CD14-positive monocyte (primary cell): ENCODE measurements at regions of chr12 and their contacts with region 1.

Region 1: DNA sequence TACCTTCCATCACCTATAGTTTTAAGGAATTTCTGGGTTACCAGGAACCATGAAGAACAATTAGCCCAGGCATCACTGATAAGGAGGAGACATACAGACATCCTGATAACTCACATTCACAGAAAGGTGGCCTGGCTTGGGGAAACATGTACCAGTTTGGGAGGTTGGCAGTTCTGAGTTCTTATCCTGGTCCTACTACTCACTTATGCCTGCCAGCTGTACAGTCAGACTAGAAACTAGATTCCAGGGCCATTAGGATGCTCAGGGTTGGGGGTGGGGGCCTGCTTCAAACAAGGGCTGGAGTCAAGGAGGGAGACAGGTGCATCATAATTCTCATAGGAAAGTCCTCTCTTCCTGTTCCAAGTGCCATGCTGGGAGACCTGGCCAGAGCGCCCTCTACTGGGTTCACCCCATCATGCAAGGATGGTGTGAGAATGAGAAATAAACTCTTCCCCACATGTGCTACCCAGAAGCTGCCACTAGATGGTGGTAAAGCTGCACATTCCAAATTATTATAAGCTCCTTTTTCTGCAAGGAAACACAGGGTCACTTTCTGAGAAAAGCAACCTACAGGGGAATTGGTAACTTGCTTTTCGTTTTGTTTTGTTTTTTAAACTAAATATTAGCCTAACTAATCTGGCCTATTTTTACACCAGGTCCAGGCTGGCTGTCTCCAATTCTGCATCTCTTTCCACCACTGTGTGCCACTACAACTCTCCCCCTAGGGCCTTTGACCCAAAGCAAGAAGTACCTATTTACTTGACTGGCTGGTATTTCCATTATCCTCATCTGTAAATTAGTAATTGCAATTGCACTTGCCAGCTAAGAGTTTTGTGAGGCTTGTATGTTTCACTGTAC is 14.5 kb downstream of the OAS2 start:
- DNase-seq: peak; percentile 42 to 62 (median 42)
- H3K4me3 ChIP-seq: no peak overlapping the region
- H3K4me3 Mint-ChIP-seq: no peak overlapping the region
- H3K27ac ChIP-seq: no peak overlapping the region
- H3K27ac Mint-ChIP-seq: peak overlapping the region in 1 of 7 donors; percentile 58
- H3K4me1 ChIP-seq: no peaks in the 10 kb centered on the region
- H3K4me1 Mint-ChIP-seq: peaks cover 2% of the 10 kb centered on the region
- H3K27me3 ChIP-seq: no peaks in the 10 kb centered on the region
- H3K27me3 Mint-ChIP-seq: no peaks in the 10 kb centered on the region
- CTCF ChIP-seq: peak; percentile 92

Region 2: DNA sequence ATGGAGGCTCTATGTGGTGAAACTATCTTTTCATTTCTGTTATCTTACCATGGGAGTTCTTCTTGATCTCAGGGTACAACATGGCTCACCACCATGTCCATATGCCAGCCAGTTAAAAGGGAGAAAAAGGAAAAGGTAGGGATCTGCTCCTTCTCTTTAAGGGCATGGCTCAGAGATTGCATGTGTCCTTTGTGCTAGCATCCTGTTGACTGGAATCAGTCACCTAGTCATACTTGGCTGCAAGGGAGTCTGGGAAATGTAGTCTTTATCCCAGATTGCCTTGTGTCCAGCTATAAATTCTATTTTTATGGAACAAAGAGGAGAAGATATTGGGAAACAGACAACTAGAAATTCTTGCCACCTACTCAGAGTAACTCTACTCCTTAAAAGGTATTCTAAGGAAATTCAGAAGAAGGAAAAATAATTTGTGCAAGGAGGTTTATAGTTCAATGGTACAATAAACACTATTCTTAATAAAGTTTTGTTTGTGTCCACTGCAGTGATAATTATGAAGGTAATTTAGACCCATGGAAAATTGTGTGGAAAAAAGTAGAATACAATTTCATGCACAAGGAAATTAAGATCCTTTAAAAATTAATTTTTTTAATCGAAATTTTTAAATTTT is 287.6 kb before region 1 on chr12:
- intact Hi-C with region 1: no loop called
- DNase-seq: no peak
- H3K4me3 ChIP-seq: no peak overlapping the region
- H3K4me3 Mint-ChIP-seq: no peak overlapping the region
- H3K27ac ChIP-seq: no peak overlapping the region
- H3K27ac Mint-ChIP-seq: no peak overlapping the region
- H3K4me1 ChIP-seq: no peaks in the 10 kb centered on the region
- H3K4me1 Mint-ChIP-seq: no peaks in the 10 kb centered on the region
- H3K27me3 ChIP-seq: peaks cover 0 to 2% of the 10 kb centered on the region in 2 donors
- H3K27me3 Mint-ChIP-seq: peaks cover 6 to 19% (median 9%) of the 10 kb centered on the region in 3 donors
- CTCF ChIP-seq: no peak

Region 3: DNA sequence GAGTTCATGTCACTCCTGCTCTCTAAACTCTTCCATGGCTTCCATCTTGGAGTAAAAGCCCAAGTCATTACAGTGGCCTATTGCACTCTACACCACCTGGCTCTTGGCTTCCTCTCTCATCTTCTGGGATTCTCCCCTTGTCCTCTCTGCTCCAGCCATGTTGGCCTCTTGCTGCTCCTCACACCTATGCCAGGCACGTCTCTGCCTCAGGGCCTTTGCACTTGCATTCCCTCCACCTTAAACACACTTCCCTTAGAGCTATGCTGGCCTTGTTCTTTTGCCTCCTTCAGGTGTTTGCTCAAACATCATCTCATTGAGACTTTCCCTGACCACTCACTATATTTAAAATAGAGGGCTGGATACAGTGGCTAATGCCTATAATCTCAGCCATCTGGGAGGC is 224.5 kb before region 1 on chr12:
- intact Hi-C with region 1: no loop called
- DNase-seq: no peak
- H3K4me3 ChIP-seq: no peak overlapping the region
- H3K4me3 Mint-ChIP-seq: no peak overlapping the region
- H3K27ac ChIP-seq: no peak overlapping the region
- H3K27ac Mint-ChIP-seq: no peak overlapping the region
- H3K4me1 ChIP-seq: no peaks in the 10 kb centered on the region
- H3K4me1 Mint-ChIP-seq: no peaks in the 10 kb centered on the region
- H3K27me3 ChIP-seq: peaks cover 0 to 3% of the 10 kb centered on the region in 2 donors
- H3K27me3 Mint-ChIP-seq: peaks cover 4 to 12% (median 7%) of the 10 kb centered on the region in 3 donors
- CTCF ChIP-seq: no peak

Region 4: GRCh38 chr12:112978163-112979040 is 14.4 kb before region 1 on chr12 and contains the start of gene OAS2:
- intact Hi-C with region 1: no loop called
- DNase-seq: peak; percentile 77 to 84 (median 82)
- H3K4me3 ChIP-seq: peak within 1 kb of the TSS; percentile 76 to 87 (median 85)
- H3K4me3 Mint-ChIP-seq: peak within 1 kb of the TSS; percentile 96 to 98
- H3K27ac ChIP-seq: peak within 1 kb of the TSS; percentile 92 to 95
- H3K27ac Mint-ChIP-seq: peak within 1 kb of the TSS; percentile 98 to 99 (median 99)
- H3K4me1 ChIP-seq: peaks cover 34 to 49% of the 10 kb centered on the region in 2 donors
- H3K4me1 Mint-ChIP-seq: peaks cover 48% of the 10 kb centered on the region
- H3K27me3 ChIP-seq: no peaks in the 10 kb centered on the region
- H3K27me3 Mint-ChIP-seq: no peaks in the 10 kb centered on the region
- CTCF ChIP-seq: no peak
- polyA plus RNA-seq, gene OAS2: 27.7 to 55.9 (median 40.1) TPM

Region 5: GRCh38 chr12:113030875-113031525 is 38.2 kb after region 1 on chr12:
- intact Hi-C with region 1: loop called in 1 of 2 experiments (anchors 2 kb)
- DNase-seq: peak; percentile 12 to 46 (median 32)
- H3K4me3 ChIP-seq: no peak overlapping the region
- H3K4me3 Mint-ChIP-seq: no peak overlapping the region
- H3K27ac ChIP-seq: no peak overlapping the region
- H3K27ac Mint-ChIP-seq: no peak overlapping the region
- H3K4me1 ChIP-seq: no peaks in the 10 kb centered on the region
- H3K4me1 Mint-ChIP-seq: peaks cover 3% of the 10 kb centered on the region
- H3K27me3 ChIP-seq: peaks cover 0 to 3% of the 10 kb centered on the region in 2 donors
- H3K27me3 Mint-ChIP-seq: peaks cover under 1 to 11% (median 11%) of the 10 kb centered on the region in 3 donors
- CTCF ChIP-seq: peak; percentile 83

Region 6: DNA sequence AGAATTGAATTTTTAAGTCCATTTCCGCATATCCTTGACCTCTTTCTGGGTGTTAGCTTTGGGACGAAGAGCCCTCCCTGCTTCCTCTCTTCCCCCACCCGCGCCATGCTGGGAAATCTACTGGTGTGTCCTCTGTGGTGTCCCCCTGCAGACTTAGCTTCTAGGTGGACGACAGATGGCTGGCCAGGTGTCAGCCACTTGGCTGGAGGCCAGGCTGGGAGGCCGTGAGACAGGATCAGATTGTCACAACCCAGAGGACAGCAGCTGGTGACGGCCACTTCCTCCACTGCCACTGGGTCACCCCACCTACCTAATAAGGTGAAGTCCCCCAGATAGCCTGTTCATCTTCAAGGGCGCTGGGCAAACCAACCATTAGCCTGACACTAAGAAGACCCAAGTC is 50.5 kb after region 1 on chr12:
- intact Hi-C with region 1: no loop called
- DNase-seq: no peak
- H3K4me3 ChIP-seq: no peak overlapping the region
- H3K4me3 Mint-ChIP-seq: no peak overlapping the region
- H3K27ac ChIP-seq: no peak overlapping the region
- H3K27ac Mint-ChIP-seq: peak overlapping the region in 1 of 7 donors; percentile 26
- H3K4me1 ChIP-seq: peaks cover 23 to 30% of the 10 kb centered on the region in 2 donors
- H3K4me1 Mint-ChIP-seq: peaks cover 35% of the 10 kb centered on the region
- H3K27me3 ChIP-seq: no peaks in the 10 kb centered on the region
- H3K27me3 Mint-ChIP-seq: peaks cover 2 to 21% (median 17%) of the 10 kb centered on the region in 3 donors
- CTCF ChIP-seq: no peak

Region 7: DNA sequence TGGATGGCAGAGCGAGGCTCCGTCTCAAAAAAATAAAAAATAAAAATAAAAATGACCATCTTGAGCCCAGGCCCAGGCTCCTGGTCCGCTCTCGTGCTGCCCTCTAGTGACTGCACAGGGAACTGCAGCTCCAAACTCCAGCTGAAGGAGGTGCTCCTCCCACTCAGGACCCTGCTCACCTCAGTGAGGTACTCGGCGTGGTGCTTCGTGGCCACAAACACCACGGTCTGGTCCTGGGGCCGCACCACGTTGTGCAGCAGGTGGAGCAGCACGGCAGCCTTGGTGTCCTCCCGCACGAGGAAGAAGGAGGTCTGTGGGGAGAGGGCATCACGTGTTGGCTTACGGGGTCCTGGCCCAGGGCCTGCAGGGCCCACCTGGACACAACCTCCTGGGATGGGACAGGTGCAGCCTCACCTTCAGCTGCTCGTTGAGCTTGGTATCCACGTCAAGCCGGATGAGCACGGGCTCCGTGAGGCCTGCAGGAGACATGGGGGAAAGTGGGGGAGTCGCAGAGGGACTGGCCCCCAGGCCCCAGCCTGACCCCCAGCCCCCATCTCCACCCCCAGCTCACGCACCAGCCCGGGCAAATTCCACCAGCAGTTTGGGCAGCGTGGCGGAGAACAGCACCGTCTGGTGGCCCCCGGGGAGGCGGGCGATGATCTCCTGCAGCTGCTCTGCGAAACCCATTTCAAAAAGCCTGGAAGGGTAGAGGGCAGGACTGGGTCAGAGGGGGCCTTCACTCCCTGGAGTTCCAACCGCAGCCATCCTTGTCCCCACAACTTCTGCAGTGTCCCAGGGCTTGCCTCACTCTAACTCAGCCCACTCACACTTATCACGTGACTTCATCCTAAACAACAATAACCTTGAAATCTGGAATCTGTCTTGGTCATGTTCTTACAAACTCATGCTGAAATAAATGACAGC is 182.0 kb after region 1 on chr12:
- intact Hi-C with region 1: loop called in 1 of 2 experiments (anchors 5 kb)
- DNase-seq: peak; percentile 49 to 55 (median 52)
- H3K4me3 ChIP-seq: no peak overlapping the region
- H3K4me3 Mint-ChIP-seq: no peak overlapping the region
- H3K27ac ChIP-seq: no peak overlapping the region
- H3K27ac Mint-ChIP-seq: peak overlapping the region in 1 of 7 donors; percentile 75
- H3K4me1 ChIP-seq: no peaks in the 10 kb centered on the region
- H3K4me1 Mint-ChIP-seq: no peaks in the 10 kb centered on the region
- H3K27me3 ChIP-seq: no peaks in the 10 kb centered on the region
- H3K27me3 Mint-ChIP-seq: peaks cover 0 to 4% (median 0%) of the 10 kb centered on the region in 3 donors
- CTCF ChIP-seq: peak; percentile 99